GM12878 (cell line): ENCODE measurements at regions of chr6 and their contacts with region 1.

Region 1: GRCh38 chr6:136226027-136226673 is 24.0 kb downstream of the MTFR2 start:
- DNase-seq: no peak
- ATAC-seq: peak; percentile 88
- H3K4me3 ChIP-seq: no peak overlapping the region
- H3K27ac ChIP-seq: no peak overlapping the region
- H3K4me1 ChIP-seq: peaks cover 9% of the 10 kb centered on the region; the same call in 1 of the 2 replicates
- H3K27me3 ChIP-seq: no peaks in the 10 kb centered on the region
- CTCF ChIP-seq: peak; percentile 95 to 100 (median 100)
- EP300 ChIP-seq: no peak
- POLR2A ChIP-seq: no peak
- RAD21 ChIP-seq: peak; percentile 99

Region 2: DNA sequence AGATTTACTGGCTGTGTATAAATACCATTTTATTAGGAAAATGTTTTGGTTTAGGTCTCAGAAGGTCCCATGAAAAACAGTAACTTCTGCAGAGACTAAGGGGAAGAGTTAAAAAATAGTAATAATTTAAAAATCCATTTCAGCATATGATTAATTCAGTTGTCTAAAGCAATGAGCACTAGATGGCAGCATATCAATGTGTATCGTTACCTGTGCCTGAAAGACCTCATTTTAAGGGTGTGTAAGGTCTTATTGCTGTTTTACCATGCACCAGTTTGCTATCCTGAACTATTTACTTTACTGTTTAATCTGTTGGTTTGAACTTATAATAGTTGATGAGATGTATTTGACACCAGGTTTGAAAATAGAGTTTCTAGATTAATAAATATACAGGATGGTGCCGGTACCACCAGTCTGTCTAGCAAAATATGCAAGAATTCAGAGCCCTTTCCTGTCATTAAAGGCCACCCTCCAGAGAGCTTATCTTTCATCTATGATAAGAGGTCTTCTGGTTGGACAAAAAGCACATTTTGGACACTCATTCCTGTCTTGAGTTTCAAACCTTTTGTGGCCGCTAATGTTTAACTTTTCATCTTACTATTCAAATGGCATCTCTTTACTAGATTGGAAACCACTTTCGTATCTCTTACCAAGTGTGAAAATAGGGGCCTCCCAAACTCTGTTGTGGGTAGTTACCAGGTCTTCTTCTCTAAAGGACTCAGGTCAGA is 719.7 kb before region 1 on chr6:
- CTCF ChIA-PET with region 1: interaction called, 14 read pairs
- POLR2A ChIA-PET with region 1: no interaction called
- RAD21 ChIA-PET with region 1: interaction called, 5 read pairs
- SMC1A ChIA-PET with region 1: interaction called, 4 read pairs
- in situ Hi-C with region 1: no loop called
- intact Hi-C with region 1: loop called (anchors 2 kb)
- DNase-seq: no peak
- ATAC-seq: peak; percentile 96
- H3K4me3 ChIP-seq: no peak overlapping the region
- H3K27ac ChIP-seq: no peak overlapping the region
- H3K4me1 ChIP-seq: no peaks in the 10 kb centered on the region
- H3K27me3 ChIP-seq: no peaks in the 10 kb centered on the region
- CTCF ChIP-seq: peak; percentile 40 to 61 (median 50); a peak in 5 of 6 replicates
- EP300 ChIP-seq: no peak
- POLR2A ChIP-seq: no peak
- RAD21 ChIP-seq: peak; percentile 74

Region 3: GRCh38 chr6:135675862-135676261 is 550.3 kb before region 1 on chr6:
- CTCF ChIA-PET with region 1: interaction called, 6 read pairs
- POLR2A ChIA-PET with region 1: no interaction called
- RAD21 ChIA-PET with region 1: no interaction called
- SMC1A ChIA-PET with region 1: interaction called, 4 read pairs
- in situ Hi-C with region 1: loop called (anchors 10 kb)
- intact Hi-C with region 1: loop called (anchors 2 kb)
- DNase-seq: peak; percentile 4
- ATAC-seq: peak; percentile 64; the same call in 2 of the 3 replicates
- H3K4me3 ChIP-seq: no peak overlapping the region
- H3K27ac ChIP-seq: no peak overlapping the region
- H3K4me1 ChIP-seq: no peaks in the 10 kb centered on the region
- H3K27me3 ChIP-seq: peaks cover 0 to 3% of the 10 kb centered on the region in 2 experiments; a peak in 1 of 4 replicates
- CTCF ChIP-seq: peak in 2 of 3 experiments; percentile 35 to 48; a peak in 4 of 6 replicates
- EP300 ChIP-seq: no peak
- POLR2A ChIP-seq: no peak
- RAD21 ChIP-seq: peak; percentile 89

Region 4: GRCh38 chr6:136037876-136038460 is 188.2 kb before region 1 on chr6:
- CTCF ChIA-PET with region 1: no interaction called
- POLR2A ChIA-PET with region 1: no interaction called
- RAD21 ChIA-PET with region 1: no interaction called
- SMC1A ChIA-PET with region 1: interaction called, 3 read pairs
- in situ Hi-C with region 1: no loop called
- intact Hi-C with region 1: loop called (anchors 5 kb)
- DNase-seq: no peak
- ATAC-seq: no peak; the same call in 2 of the 3 replicates
- H3K4me3 ChIP-seq: no peak overlapping the region
- H3K27ac ChIP-seq: no peak overlapping the region
- H3K4me1 ChIP-seq: no peaks in the 10 kb centered on the region
- H3K27me3 ChIP-seq: no peaks in the 10 kb centered on the region; a peak in 2 of 4 replicates
- CTCF ChIP-seq: no peak
- EP300 ChIP-seq: no peak
- POLR2A ChIP-seq: no peak
- RAD21 ChIP-seq: no peak

Region 5: GRCh38 chr6:136180704-136181511 is 45.2 kb before region 1 on chr6:
- CTCF ChIA-PET with region 1: no interaction called
- POLR2A ChIA-PET with region 1: no interaction called
- RAD21 ChIA-PET with region 1: no interaction called
- SMC1A ChIA-PET with region 1: no interaction called
- in situ Hi-C with region 1: no loop called
- intact Hi-C with region 1: no loop called
- DNase-seq: no peak
- ATAC-seq: no peak
- H3K4me3 ChIP-seq: no peak overlapping the region
- H3K27ac ChIP-seq: no peak overlapping the region
- H3K4me1 ChIP-seq: no peaks in the 10 kb centered on the region
- H3K27me3 ChIP-seq: no peaks in the 10 kb centered on the region; a peak in 1 of 4 replicates
- CTCF ChIP-seq: no peak
- EP300 ChIP-seq: no peak
- POLR2A ChIP-seq: no peak
- RAD21 ChIP-seq: no peak

Region 6: GRCh38 chr6:136236466-136237293 is 10.5 kb after region 1 on chr6:
- CTCF ChIA-PET with region 1: interaction called, 12 read pairs
- POLR2A ChIA-PET with region 1: no interaction called
- RAD21 ChIA-PET with region 1: no interaction called
- SMC1A ChIA-PET with region 1: interaction called, 7 read pairs
- in situ Hi-C with region 1: no loop called
- intact Hi-C with region 1: no loop called
- DNase-seq: no peak
- ATAC-seq: no peak
- H3K4me3 ChIP-seq: no peak overlapping the region
- H3K27ac ChIP-seq: no peak overlapping the region
- H3K4me1 ChIP-seq: no peaks in the 10 kb centered on the region
- H3K27me3 ChIP-seq: no peaks in the 10 kb centered on the region
- CTCF ChIP-seq: no peak
- EP300 ChIP-seq: no peak
- POLR2A ChIP-seq: no peak
- RAD21 ChIP-seq: no peak

Region 7: GRCh38 chr6:136317021-136317694 is 91.0 kb after region 1 on chr6:
- CTCF ChIA-PET with region 1: interaction called, 15 read pairs
- POLR2A ChIA-PET with region 1: no interaction called
- RAD21 ChIA-PET with region 1: interaction called, 11 read pairs
- SMC1A ChIA-PET with region 1: interaction called, 12 read pairs
- in situ Hi-C with region 1: no loop called
- intact Hi-C with region 1: no loop called
- DNase-seq: peak; percentile 4
- ATAC-seq: peak; percentile 90
- H3K4me3 ChIP-seq: no peak overlapping the region
- H3K27ac ChIP-seq: no peak overlapping the region
- H3K4me1 ChIP-seq: no peaks in the 10 kb centered on the region
- H3K27me3 ChIP-seq: no peaks in the 10 kb centered on the region
- CTCF ChIP-seq: peak; percentile 67 to 78 (median 73); a peak in 5 of 6 replicates
- EP300 ChIP-seq: no peak
- POLR2A ChIP-seq: no peak
- RAD21 ChIP-seq: peak; percentile 89